ENCODE measurements at regions of chr20 and their contacts with region 1.

Region 1: GRCh38 chr20:31723319-31724078 is 831 bp upstream of the BCL2L1 start:
- DNase-seq: peak; percentile 97 to 100 (median 98)
- H3K4me3 ChIP-seq: peak overlapping the region; percentile 92 to 99
- H3K4me3 Mint-ChIP-seq: peak overlapping the region; percentile 89 to 97 (median 94)
- H3K27ac ChIP-seq: peak overlapping the region; percentile 96
- H3K27ac Mint-ChIP-seq: peak overlapping the region; percentile 91 to 98 (median 96)
- H3K4me1 ChIP-seq: peaks cover 31% of the 10 kb centered on the region
- H3K4me1 Mint-ChIP-seq: peaks cover 31 to 46% (median 38%) of the 10 kb centered on the region in 4 donors
- H3K27me3 ChIP-seq: no peaks in the 10 kb centered on the region
- H3K27me3 Mint-ChIP-seq: no peaks in the 10 kb centered on the region

Region 2: GRCh38 chr20:31514159-31515071 is 209.1 kb before region 1 on chr20 and contains the start of gene HM13:
- CTCF ChIA-PET with region 1: no interaction called
- POLR2A ChIA-PET with region 1: interaction called, 3 read pairs
- intact Hi-C with region 1: loop called (anchors 1 kb)
- DNase-seq: peak; percentile 86 to 89 (median 88)
- H3K4me3 ChIP-seq: peak within 1 kb of the TSS; percentile 58 to 90
- H3K4me3 Mint-ChIP-seq: peak within 1 kb of the TSS in 3 of 8 donors; percentile 10 to 83 (median 78)
- H3K27ac ChIP-seq: peak within 1 kb of the TSS; percentile 91
- H3K27ac Mint-ChIP-seq: peak within 1 kb of the TSS in 5 of 7 donors; percentile 30 to 92 (median 85)
- H3K4me1 ChIP-seq: peaks cover 43% of the 10 kb centered on the region
- H3K4me1 Mint-ChIP-seq: peaks cover 8 to 13% (median 11%) of the 10 kb centered on the region in 4 donors
- H3K27me3 ChIP-seq: no peaks in the 10 kb centered on the region
- H3K27me3 Mint-ChIP-seq: no peaks in the 10 kb centered on the region
- total RNA-seq, gene HM13: 133 to 156 TPM

Region 3: DNA sequence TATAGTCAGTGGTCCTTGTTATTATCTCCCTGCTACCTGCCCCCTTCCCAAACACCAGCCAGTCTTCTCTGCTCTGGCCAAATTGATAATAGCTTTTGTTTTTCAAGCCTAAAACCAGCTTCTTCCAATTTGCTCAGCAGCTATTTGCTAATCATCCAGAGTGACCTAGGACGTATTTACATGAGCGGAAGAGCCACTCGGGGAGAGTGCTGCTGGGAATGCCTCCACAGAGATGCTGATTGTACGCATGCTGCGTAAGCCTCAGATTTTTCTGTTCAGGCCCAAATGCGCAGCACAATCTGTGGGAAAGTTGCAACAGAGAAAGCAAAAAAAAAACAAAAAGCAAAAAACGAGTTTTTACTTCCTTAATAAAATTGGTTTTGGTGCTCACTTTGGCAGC is 142.8 kb before region 1 on chr20:
- CTCF ChIA-PET with region 1: no interaction called
- POLR2A ChIA-PET with region 1: no interaction called
- intact Hi-C with region 1: no loop called
- DNase-seq: no peak
- H3K4me3 ChIP-seq: no peak overlapping the region
- H3K4me3 Mint-ChIP-seq: no peak overlapping the region
- H3K27ac ChIP-seq: no peak overlapping the region
- H3K27ac Mint-ChIP-seq: peak overlapping the region in 1 of 7 donors; percentile 9
- H3K4me1 ChIP-seq: no peaks in the 10 kb centered on the region
- H3K4me1 Mint-ChIP-seq: peaks cover 0 to 8% (median 2%) of the 10 kb centered on the region in 4 donors
- H3K27me3 ChIP-seq: no peaks in the 10 kb centered on the region
- H3K27me3 Mint-ChIP-seq: peaks cover 2 to 3% of the 10 kb centered on the region in 2 donors

Region 4: GRCh38 chr20:31605031-31605901 is 118.2 kb before region 1 on chr20 and contains the start of gene ID1:
- CTCF ChIA-PET with region 1: interaction called, 4 read pairs
- POLR2A ChIA-PET with region 1: interaction called, 3 read pairs
- intact Hi-C with region 1: loop called (anchors 5 kb)
- DNase-seq: peak; percentile 85 to 91 (median 86)
- H3K4me3 ChIP-seq: peak within 1 kb of the TSS; percentile 86 to 95
- H3K4me3 Mint-ChIP-seq: peak within 1 kb of the TSS; percentile 87 to 96 (median 92)
- H3K27ac ChIP-seq: peak within 1 kb of the TSS; percentile 26
- H3K27ac Mint-ChIP-seq: peak within 1 kb of the TSS; percentile 66 to 89 (median 84)
- H3K4me1 ChIP-seq: peaks cover 29% of the 10 kb centered on the region
- H3K4me1 Mint-ChIP-seq: peaks cover 10 to 37% (median 22%) of the 10 kb centered on the region in 4 donors
- H3K27me3 ChIP-seq: peaks cover 5% of the 10 kb centered on the region
- H3K27me3 Mint-ChIP-seq: peaks cover 24 to 34% of the 10 kb centered on the region in 2 donors
- total RNA-seq, gene ID1: 0.50 TPM in 1 of 2 experiments, not detected in the other

Region 5: GRCh38 chr20:31674895-31675827 is 48.3 kb before region 1 on chr20:
- CTCF ChIA-PET with region 1: interaction called, 94 read pairs
- POLR2A ChIA-PET with region 1: interaction called, 125 read pairs
- intact Hi-C with region 1: loop called (anchors 1 kb)
- DNase-seq: peak; percentile 61 to 84 (median 63)
- H3K4me3 ChIP-seq: peak overlapping the region; percentile 59 to 87
- H3K4me3 Mint-ChIP-seq: peak overlapping the region; percentile 91 to 97 (median 94)
- H3K27ac ChIP-seq: peak overlapping the region; percentile 75
- H3K27ac Mint-ChIP-seq: peak overlapping the region; percentile 96 to 98 (median 97)
- H3K4me1 ChIP-seq: peaks cover 88% of the 10 kb centered on the region
- H3K4me1 Mint-ChIP-seq: peaks cover 59 to 82% (median 70%) of the 10 kb centered on the region in 4 donors
- H3K27me3 ChIP-seq: no peaks in the 10 kb centered on the region
- H3K27me3 Mint-ChIP-seq: no peaks in the 10 kb centered on the region

Region 6: GRCh38 chr20:31698803-31699718 is 24.4 kb before region 1 on chr20:
- CTCF ChIA-PET with region 1: interaction called, 15 read pairs
- POLR2A ChIA-PET with region 1: interaction called, 10 read pairs
- intact Hi-C with region 1: no loop called
- DNase-seq: no peak
- H3K4me3 ChIP-seq: no peak overlapping the region
- H3K4me3 Mint-ChIP-seq: peak overlapping the region in 4 of 8 donors; percentile 11 to 71 (median 38)
- H3K27ac ChIP-seq: peak overlapping the region; percentile 6
- H3K27ac Mint-ChIP-seq: peak overlapping the region; percentile 66 to 84 (median 81)
- H3K4me1 ChIP-seq: peaks cover 58% of the 10 kb centered on the region
- H3K4me1 Mint-ChIP-seq: peaks cover 42 to 68% (median 53%) of the 10 kb centered on the region in 4 donors
- H3K27me3 ChIP-seq: no peaks in the 10 kb centered on the region
- H3K27me3 Mint-ChIP-seq: no peaks in the 10 kb centered on the region

Region 7: DNA sequence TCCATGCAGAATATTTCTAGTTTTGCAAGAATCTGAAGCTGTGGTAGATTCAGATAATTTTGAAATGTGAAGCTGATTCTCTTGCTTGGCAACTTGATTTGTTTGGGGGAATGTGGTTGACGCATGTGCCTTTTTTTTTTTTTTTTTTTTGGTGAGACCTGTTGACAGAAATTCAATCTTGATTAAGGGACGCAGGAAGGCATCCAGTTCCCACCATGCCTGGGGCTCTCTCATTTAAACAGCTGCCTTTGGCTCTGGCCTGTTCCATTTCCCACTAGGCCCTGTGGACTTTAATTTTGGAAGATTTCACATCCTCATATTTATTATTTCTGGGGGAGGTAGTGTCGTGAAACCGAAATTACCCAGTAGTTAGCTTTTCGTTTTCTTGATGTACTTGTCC is 24.1 kb after region 1 on chr20:
- CTCF ChIA-PET with region 1: interaction called, 11 read pairs
- POLR2A ChIA-PET with region 1: interaction called, 3 read pairs
- intact Hi-C with region 1: no loop called
- DNase-seq: no peak
- H3K4me3 ChIP-seq: no peak overlapping the region
- H3K4me3 Mint-ChIP-seq: no peak overlapping the region
- H3K27ac ChIP-seq: no peak overlapping the region
- H3K27ac Mint-ChIP-seq: no peak overlapping the region
- H3K4me1 ChIP-seq: peaks cover 12% of the 10 kb centered on the region
- H3K4me1 Mint-ChIP-seq: peaks cover 2 to 16% (median 11%) of the 10 kb centered on the region in 4 donors
- H3K27me3 ChIP-seq: no peaks in the 10 kb centered on the region
- H3K27me3 Mint-ChIP-seq: no peaks in the 10 kb centered on the region

Region 8: DNA sequence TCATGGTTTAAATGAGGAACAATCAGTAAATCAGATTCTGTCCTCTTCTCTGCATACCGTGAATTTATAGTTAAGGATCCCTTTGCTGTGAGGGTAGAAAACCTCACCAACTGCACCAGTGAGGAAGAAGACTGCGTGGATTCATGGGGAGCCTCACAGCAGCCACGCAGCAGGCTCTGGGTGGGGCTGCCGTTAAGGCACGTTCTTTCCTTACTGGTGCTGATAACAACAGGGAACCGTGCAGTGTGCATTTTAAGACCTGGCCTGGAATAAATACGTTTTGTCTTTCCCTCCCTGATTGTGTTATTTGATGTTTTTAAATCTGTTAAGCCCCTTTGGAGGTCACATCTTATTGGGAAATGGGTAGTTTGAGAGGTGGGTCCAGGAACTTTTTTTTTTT is 78.0 kb after region 1 on chr20:
- CTCF ChIA-PET with region 1: no interaction called
- POLR2A ChIA-PET with region 1: no interaction called
- intact Hi-C with region 1: no loop called
- DNase-seq: no peak
- H3K4me3 ChIP-seq: no peak overlapping the region
- H3K4me3 Mint-ChIP-seq: no peak overlapping the region
- H3K27ac ChIP-seq: no peak overlapping the region
- H3K27ac Mint-ChIP-seq: peak overlapping the region in 1 of 7 donors; percentile 11
- H3K4me1 ChIP-seq: peaks cover 14% of the 10 kb centered on the region
- H3K4me1 Mint-ChIP-seq: peaks cover 12 to 18% (median 13%) of the 10 kb centered on the region in 4 donors
- H3K27me3 ChIP-seq: no peaks in the 10 kb centered on the region
- H3K27me3 Mint-ChIP-seq: no peaks in the 10 kb centered on the region

Region 9: GRCh38 chr20:31822421-31823330 is 99.2 kb after region 1 on chr20:
- CTCF ChIA-PET with region 1: no interaction called
- POLR2A ChIA-PET with region 1: no interaction called
- intact Hi-C with region 1: no loop called
- DNase-seq: peak; percentile 59 to 74 (median 63)
- H3K4me3 ChIP-seq: no peak overlapping the region
- H3K4me3 Mint-ChIP-seq: peak overlapping the region in 4 of 8 donors; percentile 20 to 52 (median 44)
- H3K27ac ChIP-seq: no peak overlapping the region
- H3K27ac Mint-ChIP-seq: peak overlapping the region in 1 of 7 donors; percentile 43
- H3K4me1 ChIP-seq: no peaks in the 10 kb centered on the region
- H3K4me1 Mint-ChIP-seq: peaks cover 0 to 7% (median 6%) of the 10 kb centered on the region in 4 donors
- H3K27me3 ChIP-seq: no peaks in the 10 kb centered on the region
- H3K27me3 Mint-ChIP-seq: peaks cover 0 to 2% of the 10 kb centered on the region in 2 donors

Region 10: DNA sequence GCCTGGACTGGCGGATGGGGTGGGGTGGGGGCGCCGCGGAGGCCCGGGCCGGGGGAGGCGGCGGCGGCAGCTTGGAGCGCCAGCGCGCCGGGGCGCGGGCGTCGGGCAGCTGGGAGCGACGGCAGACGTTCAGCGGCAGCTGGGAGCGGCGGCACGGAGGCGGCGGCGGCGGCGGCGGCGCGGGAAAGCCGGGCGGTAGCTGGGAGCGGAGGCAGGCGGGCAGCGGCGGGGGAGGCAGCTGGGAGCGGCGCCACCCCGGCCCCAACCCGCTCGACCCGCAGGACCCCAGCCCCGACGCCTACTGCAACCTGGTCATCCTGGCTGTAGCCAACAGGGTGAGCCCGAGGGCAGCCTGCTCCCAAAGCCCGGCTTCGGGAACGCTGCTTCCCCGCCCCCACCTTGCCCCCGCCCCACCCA is 295.6 kb after region 1 on chr20:
- CTCF ChIA-PET with region 1: no interaction called
- POLR2A ChIA-PET with region 1: no interaction called
- intact Hi-C with region 1: no loop called
- DNase-seq: peak in 1 of 5 donors; percentile 10
- H3K4me3 ChIP-seq: no peak overlapping the region
- H3K4me3 Mint-ChIP-seq: peak overlapping the region in 1 of 8 donors; percentile 87
- H3K27ac ChIP-seq: no peak overlapping the region
- H3K27ac Mint-ChIP-seq: peak overlapping the region in 1 of 7 donors; percentile 25
- H3K4me1 ChIP-seq: peaks cover 13% of the 10 kb centered on the region
- H3K4me1 Mint-ChIP-seq: peaks cover 13 to 26% (median 20%) of the 10 kb centered on the region in 4 donors
- H3K27me3 ChIP-seq: peaks cover 23% of the 10 kb centered on the region
- H3K27me3 Mint-ChIP-seq: peaks cover 58 to 70% of the 10 kb centered on the region in 2 donors

Measured in CD4-positive, alpha-beta memory T cell (primary cell).